Activated CD8-positive, alpha-beta T cell treated with anti-CD3 and anti-CD28 coated beads, Interleukin-2, amount 10 ng/mL, durations not matched to agents 7 days and 5 days (primary cell): ENCODE measurements at regions of chr1 and their contacts with region 1.

Region 1: DNA sequence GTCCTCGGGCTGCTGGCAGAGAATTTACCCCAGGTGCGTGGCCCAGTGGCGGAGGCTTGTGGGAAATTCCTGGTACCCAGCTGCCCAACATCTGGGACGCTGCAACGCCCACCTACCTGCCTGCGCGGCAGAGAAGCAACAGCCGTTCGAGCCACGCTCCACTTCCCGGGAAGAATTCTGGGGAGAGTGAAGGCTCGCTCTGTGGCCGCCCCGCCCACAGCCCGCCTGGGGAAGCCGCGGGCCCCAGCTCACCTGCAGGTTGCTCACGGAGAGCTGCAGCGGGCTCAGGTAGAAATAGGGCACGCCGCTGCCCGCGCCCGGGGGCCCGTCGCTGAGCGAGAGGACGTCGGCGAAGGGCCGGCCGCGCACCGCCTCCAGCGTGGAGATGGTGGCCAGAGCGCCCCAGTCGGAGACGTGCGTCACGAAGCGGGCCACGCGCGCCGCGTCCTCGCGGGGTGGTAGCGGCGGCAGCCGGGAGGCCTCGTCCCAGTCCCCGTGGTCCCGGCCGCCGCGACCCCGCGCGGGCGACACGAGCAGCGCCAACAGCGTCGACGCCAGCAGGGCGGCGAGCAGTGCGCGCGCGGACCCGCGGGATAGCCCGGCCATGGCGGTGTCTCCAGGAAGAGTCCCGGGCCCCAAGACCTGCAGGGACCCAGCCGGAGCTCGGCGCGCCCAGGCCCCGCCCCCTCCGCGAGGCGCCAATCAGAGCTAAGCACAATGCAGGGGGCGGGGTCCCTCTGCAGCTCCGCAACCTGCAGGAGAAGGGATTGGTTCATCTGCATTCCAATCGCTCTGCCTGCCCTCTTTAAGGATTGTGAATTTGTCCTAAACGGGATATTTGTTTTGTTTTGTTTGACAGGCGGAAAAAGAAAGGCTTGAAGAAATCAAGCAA is at the start of gene CREG1:
- DNase-seq: peak; percentile 90
- ATAC-seq: peak; percentile 100
- H3K4me3 Mint-ChIP-seq: peak within 1 kb of the TSS; percentile 84
- H3K27ac Mint-ChIP-seq: peak within 1 kb of the TSS; percentile 47
- H3K4me1 Mint-ChIP-seq: peaks cover 28% of the 10 kb centered on the region
- H3K27me3 Mint-ChIP-seq: peaks cover 9% of the 10 kb centered on the region
- total RNA-seq, gene CREG1: 7.3 to 7.7 TPM

Region 2: DNA sequence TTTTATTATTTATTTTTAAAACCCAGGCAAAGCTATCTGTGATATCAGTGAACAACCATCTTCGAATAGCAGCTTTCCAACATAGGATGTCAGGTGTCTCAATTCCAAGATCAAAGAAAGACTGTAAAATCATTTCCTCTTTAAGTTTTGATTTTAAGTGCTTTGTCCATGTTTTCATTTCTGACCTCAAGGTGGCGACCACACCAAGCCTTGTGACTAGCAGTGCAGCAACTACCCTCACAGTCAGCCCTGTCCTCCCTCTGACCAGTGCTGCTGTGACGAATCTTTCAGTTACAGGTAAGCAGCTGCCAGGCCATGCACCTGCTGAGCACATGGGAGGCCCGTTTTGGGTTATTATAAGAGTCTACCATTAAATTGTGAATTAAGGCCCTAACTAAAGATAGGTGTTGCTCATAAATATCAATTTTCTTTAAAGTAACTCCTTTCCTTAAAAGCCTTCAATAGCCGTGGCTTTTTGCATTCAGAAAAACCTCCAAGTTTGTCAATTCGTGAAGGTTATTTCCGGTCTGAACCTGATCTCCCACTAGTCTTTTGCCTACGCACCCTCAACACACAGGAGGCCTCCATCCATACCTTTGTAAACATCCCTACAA is 152.0 kb before region 1 on chr1:
- CTCF ChIA-PET with region 1: interaction called, 13 read pairs
- POLR2A ChIA-PET with region 1: no interaction called
- DNase-seq: peak; percentile 73
- ATAC-seq: peak; percentile 91
- H3K4me3 Mint-ChIP-seq: no peak overlapping the region
- H3K27ac Mint-ChIP-seq: no peak overlapping the region
- H3K4me1 Mint-ChIP-seq: peaks cover 8% of the 10 kb centered on the region
- H3K27me3 Mint-ChIP-seq: no peaks in the 10 kb centered on the region

Region 3: GRCh38 chr1:167563579-167564246 is 10.3 kb after region 1 on chr1:
- CTCF ChIA-PET with region 1: interaction called, 20 read pairs
- POLR2A ChIA-PET with region 1: no interaction called
- DNase-seq: no peak
- ATAC-seq: no peak
- H3K4me3 Mint-ChIP-seq: no peak overlapping the region
- H3K27ac Mint-ChIP-seq: no peak overlapping the region
- H3K4me1 Mint-ChIP-seq: no peaks in the 10 kb centered on the region
- H3K27me3 Mint-ChIP-seq: peaks cover 11% of the 10 kb centered on the region

Region 4: GRCh38 chr1:167829868-167830267 is 276.5 kb after region 1 on chr1:
- CTCF ChIA-PET with region 1: no interaction called
- POLR2A ChIA-PET with region 1: no interaction called
- DNase-seq: no peak
- ATAC-seq: no peak
- H3K4me3 Mint-ChIP-seq: no peak overlapping the region
- H3K27ac Mint-ChIP-seq: no peak overlapping the region
- H3K4me1 Mint-ChIP-seq: no peaks in the 10 kb centered on the region
- H3K27me3 Mint-ChIP-seq: peaks cover 8% of the 10 kb centered on the region